H1 (cell line): ENCODE measurements at regions of chr12 and their contacts with region 1.

Region 1: DNA sequence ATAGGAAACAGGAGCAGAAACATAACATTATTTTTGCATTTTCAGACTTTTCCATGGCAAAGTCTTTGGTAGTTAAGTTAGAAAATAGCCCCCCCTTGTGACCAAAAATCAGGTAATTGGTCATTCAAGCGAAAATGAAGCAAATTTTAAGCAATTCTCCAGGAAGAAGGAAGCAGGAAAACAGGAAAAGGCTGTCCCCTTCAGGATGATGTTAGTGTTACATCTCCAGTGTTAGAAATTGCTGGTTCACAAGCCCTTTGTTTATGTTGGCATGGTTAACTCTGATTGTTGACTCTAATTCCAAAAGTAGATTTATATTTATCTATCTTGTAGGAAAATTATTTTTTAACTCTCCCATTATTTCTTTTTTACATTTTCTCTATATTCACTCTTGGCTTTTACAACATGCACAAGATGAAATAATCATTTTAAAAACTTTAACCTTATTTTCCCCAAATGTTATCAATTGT is 18.8 kb upstream of the GAS2L3 start:
- DNase-seq: no peak
- H3K4me3 ChIP-seq: no peak overlapping the region
- H3K27ac ChIP-seq: no peak overlapping the region
- H3K4me1 ChIP-seq: no peaks in the 10 kb centered on the region
- H3K27me3 ChIP-seq: peaks cover 0 to 1% (median 0%) of the 10 kb centered on the region in 4 experiments; a peak in 1 of 7 replicates
- CTCF ChIP-seq: peak in 2 of 3 experiments; percentile 90 to 94; a peak in 3 of 4 replicates
- EP300 ChIP-seq: no peak
- POLR2A ChIP-seq: no peak
- RAD21 ChIP-seq: peak; percentile 97 to 99

Region 2: DNA sequence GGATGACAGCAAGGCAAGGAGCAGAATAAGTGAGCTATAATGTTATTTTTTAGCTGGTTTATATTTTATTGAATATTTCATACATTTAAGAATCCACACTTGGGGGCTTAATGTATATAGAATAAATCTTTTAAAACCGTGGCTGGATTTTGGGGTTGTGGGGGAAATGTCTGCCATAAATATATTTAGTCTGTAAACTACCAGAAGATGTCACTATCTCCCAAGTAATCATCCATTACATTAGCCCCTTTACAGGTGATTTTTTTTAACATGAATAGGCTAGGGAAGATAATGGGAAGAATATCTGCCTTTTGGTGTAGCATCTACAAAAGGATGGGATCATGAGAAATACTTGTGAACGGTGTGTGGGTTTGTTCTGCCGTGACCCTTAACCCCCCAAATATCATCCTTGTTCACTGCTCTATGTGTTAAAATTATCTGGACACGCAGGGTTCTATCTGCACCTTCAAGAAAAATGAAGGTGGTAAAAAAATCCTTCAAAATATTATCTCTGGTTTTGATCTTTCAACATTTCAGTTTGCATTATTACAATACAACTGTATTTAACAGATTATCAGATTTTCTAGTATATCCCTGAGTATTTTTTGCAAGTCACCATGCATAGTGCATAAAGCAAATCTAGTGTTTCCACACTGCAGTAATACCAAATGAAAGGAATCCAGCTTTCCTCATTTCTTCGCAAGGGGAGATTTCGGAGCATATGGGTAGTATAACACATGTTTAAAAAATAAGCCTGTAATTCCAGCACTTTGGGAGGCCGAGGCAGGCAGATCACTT is 205.8 kb before region 1 on chr12:
- CTCF ChIA-PET with region 1: interaction called, 94 read pairs
- POLR2A ChIA-PET with region 1: no interaction called
- DNase-seq: no peak
- H3K4me3 ChIP-seq: no peak overlapping the region
- H3K27ac ChIP-seq: no peak overlapping the region
- H3K4me1 ChIP-seq: no peaks in the 10 kb centered on the region
- H3K27me3 ChIP-seq: no peaks in the 10 kb centered on the region
- CTCF ChIP-seq: peak in 2 of 3 experiments; percentile 36 to 51; a peak in 2 of 4 replicates
- EP300 ChIP-seq: no peak
- POLR2A ChIP-seq: no peak
- RAD21 ChIP-seq: peak; percentile 83 to 89

Region 3: GRCh38 chr12:100356644-100357223 is 197.9 kb before region 1 on chr12 and contains the start of gene SLC17A8:
- CTCF ChIA-PET with region 1: interaction called, 42 read pairs
- POLR2A ChIA-PET with region 1: no interaction called
- DNase-seq: peak; percentile 13 to 63
- H3K4me3 ChIP-seq: peak within 1 kb of the TSS in 1 of 4 experiments; percentile 34; a peak in 4 of 8 replicates
- H3K27ac ChIP-seq: no peak within 1 kb of the TSS
- H3K4me1 ChIP-seq: peaks cover 2 to 7% (median 4%) of the 10 kb centered on the region in 4 experiments; a peak in 2 of 7 replicates
- H3K27me3 ChIP-seq: no peaks in the 10 kb centered on the region
- CTCF ChIP-seq: no peak
- EP300 ChIP-seq: no peak
- POLR2A ChIP-seq: no peak
- RAD21 ChIP-seq: no peak; a peak in 1 of 4 replicates
- total RNA-seq, gene SLC17A8: 0.11 and 0.30 TPM in 2 replicates

Region 4: DNA sequence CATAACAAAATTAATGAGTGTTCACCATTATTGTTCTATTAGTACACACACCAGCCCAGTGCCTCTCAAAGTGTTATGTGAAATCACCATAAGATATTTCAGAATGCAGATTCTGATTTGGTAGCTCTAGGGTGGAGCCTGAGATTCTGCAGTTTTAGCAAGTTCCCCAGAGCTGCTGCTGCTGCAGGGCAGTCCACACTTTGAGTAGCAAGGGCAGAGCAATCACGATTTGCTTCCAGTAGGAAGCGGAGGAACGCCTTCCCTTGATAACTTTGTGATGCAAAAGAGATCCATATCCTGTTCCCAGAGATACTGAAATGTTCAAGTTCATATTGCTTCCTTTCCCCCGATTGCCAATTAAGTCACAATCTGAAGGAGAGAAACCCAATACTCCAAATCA is 139.9 kb before region 1 on chr12:
- CTCF ChIA-PET with region 1: interaction called, 11 read pairs
- POLR2A ChIA-PET with region 1: no interaction called
- DNase-seq: peak in 1 of 2 experiments; percentile 38
- H3K4me3 ChIP-seq: no peak overlapping the region
- H3K27ac ChIP-seq: no peak overlapping the region
- H3K4me1 ChIP-seq: peaks cover 0 to 3% (median 1%) of the 10 kb centered on the region in 4 experiments; a peak in 1 of 7 replicates
- H3K27me3 ChIP-seq: no peaks in the 10 kb centered on the region
- CTCF ChIP-seq: no peak
- EP300 ChIP-seq: no peak
- POLR2A ChIP-seq: no peak
- RAD21 ChIP-seq: no peak

Region 5: GRCh38 chr12:100566887-100567637 is 12.4 kb after region 1 on chr12:
- CTCF ChIA-PET with region 1: interaction called, 14 read pairs
- POLR2A ChIA-PET with region 1: no interaction called
- DNase-seq: no peak
- H3K4me3 ChIP-seq: no peak overlapping the region
- H3K27ac ChIP-seq: no peak overlapping the region
- H3K4me1 ChIP-seq: no peaks in the 10 kb centered on the region; a peak in 1 of 7 replicates
- H3K27me3 ChIP-seq: 0 out of 7 replicates have a peak, but pooled peaks cover 0 to under 1% (median under 1%) of the 10 kb centered on the region in 4 experiments
- CTCF ChIP-seq: no peak
- EP300 ChIP-seq: no peak
- POLR2A ChIP-seq: no peak
- RAD21 ChIP-seq: no peak

Region 6: GRCh38 chr12:100624571-100624970 is 69.9 kb after region 1 on chr12:
- CTCF ChIA-PET with region 1: no interaction called
- POLR2A ChIA-PET with region 1: no interaction called
- DNase-seq: no peak
- H3K4me3 ChIP-seq: no peak overlapping the region
- H3K27ac ChIP-seq: no peak overlapping the region
- H3K4me1 ChIP-seq: no peaks in the 10 kb centered on the region
- H3K27me3 ChIP-seq: no peaks in the 10 kb centered on the region
- CTCF ChIP-seq: no peak
- EP300 ChIP-seq: no peak
- POLR2A ChIP-seq: no peak
- RAD21 ChIP-seq: no peak